Aorta (tissue), 5 donors: ENCODE measurements at regions of chrX and their contacts with region 1.

Region 1: GRCh38 chrX:15579778-15580747 is 20.7 kb downstream of the ACE2 start:
- DNase-seq: peak in 1 of 2 donors; percentile 51
- ATAC-seq: peak; percentile 46
- H3K4me3 ChIP-seq: no peak overlapping the region
- H3K27ac ChIP-seq: no peak overlapping the region
- H3K4me1 ChIP-seq: no peaks in the 10 kb centered on the region
- H3K27me3 ChIP-seq: no peaks in the 10 kb centered on the region

Region 2: GRCh38 chrX:15349046-15349445 is 231.0 kb before region 1 on chrX:
- intact Hi-C with region 1: loop called in 1 of 2 experiments (anchors 10 kb)
- DNase-seq: no peak
- ATAC-seq: peak; percentile 70
- H3K4me3 ChIP-seq: no peak overlapping the region
- H3K27ac ChIP-seq: no peak overlapping the region
- H3K4me1 ChIP-seq: no peaks in the 10 kb centered on the region
- H3K27me3 ChIP-seq: no peaks in the 10 kb centered on the region

Region 3: DNA sequence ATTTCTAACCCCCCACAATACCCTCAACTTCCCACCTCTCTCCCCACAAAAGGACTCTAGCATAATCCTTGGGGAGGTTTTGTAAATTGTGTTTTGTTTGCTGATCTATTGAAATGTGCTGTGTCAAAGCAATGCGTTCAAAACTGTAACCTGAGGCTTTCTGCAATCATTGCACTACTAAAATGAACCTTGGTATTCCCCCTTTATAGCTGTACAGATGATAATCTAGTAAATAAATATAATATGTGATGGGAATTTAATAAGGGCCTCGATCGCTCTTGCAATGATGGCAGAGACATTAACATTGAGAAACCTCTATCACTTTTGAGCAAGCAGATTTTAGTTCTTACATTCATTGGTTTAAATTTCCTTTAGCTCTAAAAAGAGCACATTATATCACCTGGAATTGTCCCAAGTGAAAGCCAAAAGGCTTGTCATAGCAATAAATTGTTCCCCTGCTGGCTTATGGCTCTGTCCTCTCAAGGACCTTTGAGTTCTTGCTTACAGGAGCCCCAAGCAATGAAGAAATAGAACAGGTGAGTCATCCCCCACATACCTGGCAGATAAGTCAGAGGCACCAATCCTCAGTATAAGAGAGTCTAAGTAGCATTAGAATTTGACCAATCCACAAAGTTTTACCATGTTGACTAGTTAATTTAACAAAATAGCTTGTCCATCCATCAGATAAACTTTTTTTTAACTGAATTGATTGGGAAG is 39.2 kb after region 1 on chrX:
- intact Hi-C with region 1: no loop called
- DNase-seq: no peak
- ATAC-seq: no peak
- H3K4me3 ChIP-seq: no peak overlapping the region
- H3K27ac ChIP-seq: no peak overlapping the region
- H3K4me1 ChIP-seq: no peaks in the 10 kb centered on the region
- H3K27me3 ChIP-seq: no peaks in the 10 kb centered on the region